ENCODE measurements at regions of chr11 and their contacts with region 1.

Region 1: GRCh38 chr11:115324581-115325432 is 179.4 kb downstream of the CADM1 start:
- DNase-seq: no peak
- H3K4me3 ChIP-seq: peak overlapping the region in 1 of 2 donors; percentile 26
- H3K27ac ChIP-seq: no peak overlapping the region
- H3K4me1 ChIP-seq: no peaks in the 10 kb centered on the region
- H3K27me3 ChIP-seq: no peaks in the 10 kb centered on the region
- CTCF ChIP-seq: peak; percentile 12 to 68 (median 64)

Region 2: DNA sequence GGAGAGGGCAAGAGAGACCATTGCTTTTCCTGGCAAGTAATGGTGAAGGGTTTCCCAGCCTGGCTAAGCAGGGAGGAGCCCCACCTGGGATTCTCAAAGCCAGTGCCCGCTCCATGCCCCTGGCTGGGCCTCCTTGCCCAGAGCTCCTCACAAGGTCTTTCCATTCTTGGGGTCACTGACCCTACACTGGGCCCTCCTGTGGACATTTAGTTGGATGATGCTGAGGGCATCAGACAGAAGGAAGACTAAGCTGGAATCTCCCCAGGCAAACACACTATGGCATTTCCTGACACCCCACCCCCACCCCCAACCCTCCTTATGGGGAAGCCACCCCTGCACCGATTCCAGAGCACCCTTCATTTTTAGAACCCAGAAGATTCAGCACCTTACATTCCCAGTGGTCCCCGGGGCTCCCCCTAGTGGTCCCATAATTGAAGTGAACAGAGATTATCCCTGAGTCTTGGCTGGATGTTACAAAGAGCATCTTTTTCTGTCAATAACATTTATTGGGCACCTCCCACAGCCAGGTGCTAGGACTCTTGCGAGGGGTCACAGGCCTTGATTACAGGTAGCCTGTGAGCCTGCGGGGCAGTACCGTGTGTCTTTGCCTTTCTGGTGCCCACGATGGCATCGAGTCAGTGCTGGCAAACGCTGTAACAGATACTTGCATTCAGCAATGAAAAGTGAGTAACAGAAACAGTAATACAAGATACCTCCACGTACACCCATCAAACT is 899.5 kb after region 1 on chr11:
- intact Hi-C with region 1: loop called (anchors 2 kb)
- DNase-seq: no peak
- H3K4me3 ChIP-seq: no peak overlapping the region
- H3K27ac ChIP-seq: no peak overlapping the region
- H3K4me1 ChIP-seq: no peaks in the 10 kb centered on the region
- H3K27me3 ChIP-seq: no peaks in the 10 kb centered on the region
- CTCF ChIP-seq: peak in 2 of 3 experiments; percentile 24 to 60

Region 3: DNA sequence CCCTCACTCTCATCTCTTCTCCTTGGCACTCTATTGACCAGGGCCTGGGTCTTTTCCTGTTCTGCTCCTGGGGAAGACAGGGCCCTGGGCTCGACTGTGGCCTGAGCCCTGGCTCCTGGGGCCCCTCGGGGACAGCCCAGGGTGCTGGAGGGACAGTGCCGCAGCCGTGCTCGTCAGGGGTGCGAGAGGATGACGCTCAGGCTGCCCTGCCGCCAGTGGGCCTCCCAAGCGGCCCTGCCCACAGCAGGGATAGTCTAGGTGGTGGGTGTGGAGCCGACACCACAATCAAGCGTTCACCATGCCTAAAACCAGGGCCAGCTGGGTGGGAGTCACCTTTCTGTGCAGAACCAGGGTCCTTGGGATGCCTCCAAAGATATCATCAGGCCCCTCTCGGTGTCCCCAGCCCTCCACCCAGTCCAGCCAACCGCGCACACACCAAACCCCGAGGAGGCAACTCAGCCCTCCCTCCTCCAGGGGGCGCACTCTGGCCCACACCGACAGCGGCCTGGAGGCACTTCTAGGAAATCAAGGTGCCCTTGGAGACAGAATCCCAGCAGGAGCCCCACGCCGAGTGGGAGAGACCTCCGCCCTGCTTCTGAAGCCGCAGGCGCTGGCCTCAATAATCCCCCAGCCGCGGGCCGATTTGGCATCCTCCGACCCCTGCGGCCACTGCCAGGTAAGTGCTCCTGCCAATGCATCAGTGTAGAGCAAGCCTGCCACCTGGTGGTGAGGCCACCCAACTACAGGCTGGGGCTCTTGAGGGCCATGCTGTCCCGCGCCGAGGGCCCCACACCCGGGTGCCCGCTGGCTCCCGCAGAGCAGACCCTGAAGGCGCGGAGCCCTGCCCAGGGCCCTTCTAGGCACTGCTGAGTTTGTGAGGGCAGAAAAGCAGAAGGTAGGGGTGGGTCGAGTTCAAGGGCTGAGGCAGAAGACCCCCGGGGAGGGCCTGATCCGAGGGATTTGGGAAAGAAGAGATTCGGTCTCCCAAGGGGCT is 951.5 kb after region 1 on chr11:
- intact Hi-C with region 1: loop called (anchors 5 kb)
- DNase-seq: peak in 1 of 2 donors; percentile 76
- H3K4me3 ChIP-seq: no peak overlapping the region
- H3K27ac ChIP-seq: no peak overlapping the region
- H3K4me1 ChIP-seq: no peaks in the 10 kb centered on the region
- H3K27me3 ChIP-seq: no peaks in the 10 kb centered on the region
- CTCF ChIP-seq: peak; percentile 65 to 77 (median 75)